Tibial artery (tissue), 4 donors: ENCODE measurements at regions of chr10 and their contacts with region 1.

Region 1: DNA sequence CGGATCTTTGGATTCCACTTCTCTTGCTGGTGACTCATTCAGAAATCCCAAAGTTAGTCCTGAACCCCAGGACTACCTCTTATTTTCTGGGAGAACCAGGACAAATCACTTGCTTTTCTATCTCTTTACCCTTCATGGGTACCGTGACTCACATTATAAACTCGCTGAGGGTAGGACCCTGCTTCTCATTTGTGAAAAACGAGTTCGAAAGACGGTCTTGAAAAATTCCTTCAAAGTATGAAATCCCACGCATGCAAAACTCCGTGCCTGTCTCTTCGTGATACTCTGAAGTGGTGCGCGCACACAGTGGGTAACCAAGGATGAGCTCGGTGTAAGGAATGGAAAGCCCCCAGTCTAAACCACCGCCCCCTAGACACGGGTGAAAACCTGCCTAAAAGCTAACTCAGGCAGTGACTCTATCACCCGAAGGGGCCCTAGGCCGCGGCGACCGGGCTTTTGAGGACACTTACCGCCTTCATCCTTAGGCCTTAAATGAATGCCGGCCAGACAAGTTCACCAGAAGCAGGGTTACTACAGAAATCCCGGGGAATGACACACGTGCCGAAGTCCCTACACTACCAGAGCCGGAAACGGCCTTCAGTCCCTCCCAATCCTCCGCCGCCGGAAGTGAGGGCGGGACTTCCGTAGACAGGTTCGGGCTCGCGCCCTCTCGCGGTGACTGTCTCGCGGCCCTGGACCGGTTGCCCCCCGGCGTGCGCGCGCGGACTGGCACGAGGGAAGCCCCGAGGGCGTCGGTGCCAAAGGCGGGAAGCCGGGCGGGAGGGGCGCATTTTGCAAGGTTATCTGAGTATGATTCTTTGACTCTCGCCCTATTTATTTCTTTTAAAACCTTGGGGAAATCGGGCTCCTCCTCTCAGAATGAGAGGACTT is at the start of gene NOC3L:
- DNase-seq: peak; percentile 95 to 96
- H3K4me3 ChIP-seq: peak within 1 kb of the TSS; percentile 64 to 71
- H3K27ac ChIP-seq: peak within 1 kb of the TSS; percentile 55 to 75
- H3K4me1 ChIP-seq: peaks cover 0 to 17% (median 12%) of the 10 kb centered on the region in 4 donors
- H3K27me3 ChIP-seq: no peaks in the 10 kb centered on the region
- CTCF ChIP-seq: peak; percentile 71 to 83

Region 2: DNA sequence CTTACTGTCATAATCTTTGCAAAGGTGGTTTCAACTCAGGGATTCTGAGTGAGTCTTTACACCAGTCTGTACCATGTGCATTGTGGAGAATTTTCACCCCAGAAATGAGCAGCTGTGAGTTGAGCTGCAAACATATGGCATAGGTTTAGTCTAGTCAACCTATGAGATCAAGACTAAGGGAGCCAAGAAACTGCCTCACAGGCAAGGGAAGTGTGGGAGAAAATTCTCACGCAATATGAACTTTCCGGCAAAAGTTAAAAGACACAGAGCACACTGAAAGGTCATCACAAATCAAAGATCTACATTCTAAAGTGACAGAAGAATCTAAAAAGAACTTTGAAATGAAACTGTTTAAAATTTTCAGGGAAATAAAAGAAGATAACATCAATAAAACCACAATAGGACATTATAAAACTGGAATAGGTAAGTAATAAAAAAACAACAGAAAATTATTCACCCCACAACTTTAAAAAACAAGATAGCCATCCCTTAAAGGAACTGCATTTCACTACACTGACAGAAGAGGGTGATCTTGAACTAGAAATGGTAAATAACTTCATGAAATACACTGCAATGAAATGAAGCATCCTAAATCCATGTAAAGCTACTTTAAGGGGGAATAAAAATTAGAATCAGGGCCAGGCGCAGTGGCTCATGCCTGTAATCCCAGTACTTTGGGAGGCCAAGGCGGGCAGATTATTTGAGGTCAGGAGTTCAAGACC is 541.4 kb before region 1 on chr10:
- intact Hi-C with region 1: no loop called
- DNase-seq: no peak
- H3K4me3 ChIP-seq: no peak overlapping the region
- H3K27ac ChIP-seq: no peak overlapping the region
- H3K4me1 ChIP-seq: peaks cover 0 to 8% (median 2%) of the 10 kb centered on the region in 4 donors
- H3K27me3 ChIP-seq: no peaks in the 10 kb centered on the region
- CTCF ChIP-seq: no peak

Region 3: GRCh38 chr10:94052866-94053791 is 309.5 kb before region 1 on chr10:
- intact Hi-C with region 1: no loop called
- DNase-seq: no peak
- H3K4me3 ChIP-seq: no peak overlapping the region
- H3K27ac ChIP-seq: no peak overlapping the region
- H3K4me1 ChIP-seq: peaks cover 0 to 11% (median 0%) of the 10 kb centered on the region in 4 donors
- H3K27me3 ChIP-seq: no peaks in the 10 kb centered on the region
- CTCF ChIP-seq: no peak

Region 4: DNA sequence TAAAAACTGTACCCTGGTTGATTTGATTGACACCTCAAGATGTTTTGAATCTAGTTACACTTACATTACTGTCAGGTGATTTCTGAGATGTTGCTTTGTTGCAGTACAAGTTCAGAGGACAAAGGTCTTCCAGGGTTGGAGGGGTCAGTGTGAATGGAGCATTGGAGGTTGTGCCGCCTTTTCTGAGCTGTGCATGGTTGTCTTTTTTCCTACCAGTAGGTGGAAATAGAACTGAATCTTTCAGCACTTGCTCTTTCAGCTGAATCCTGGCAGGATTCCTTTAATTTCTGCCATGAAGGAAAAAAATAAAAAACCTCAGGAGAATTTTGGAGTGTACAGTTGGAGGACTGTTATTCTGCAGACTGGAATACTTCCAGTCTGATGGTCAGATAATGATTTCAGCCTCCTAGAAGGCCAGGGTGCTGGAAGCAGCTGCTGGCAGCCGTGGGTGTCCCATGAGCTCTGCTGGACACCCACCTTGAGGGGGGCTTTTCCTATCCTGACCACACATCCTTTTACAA is 286.2 kb before region 1 on chr10:
- intact Hi-C with region 1: no loop called
- DNase-seq: no peak
- H3K4me3 ChIP-seq: peak overlapping the region in 1 of 2 donors; percentile 18
- H3K27ac ChIP-seq: no peak overlapping the region
- H3K4me1 ChIP-seq: peaks cover 0 to 19% (median 9%) of the 10 kb centered on the region in 4 donors
- H3K27me3 ChIP-seq: no peaks in the 10 kb centered on the region
- CTCF ChIP-seq: peak; percentile 64 to 83

Region 5: DNA sequence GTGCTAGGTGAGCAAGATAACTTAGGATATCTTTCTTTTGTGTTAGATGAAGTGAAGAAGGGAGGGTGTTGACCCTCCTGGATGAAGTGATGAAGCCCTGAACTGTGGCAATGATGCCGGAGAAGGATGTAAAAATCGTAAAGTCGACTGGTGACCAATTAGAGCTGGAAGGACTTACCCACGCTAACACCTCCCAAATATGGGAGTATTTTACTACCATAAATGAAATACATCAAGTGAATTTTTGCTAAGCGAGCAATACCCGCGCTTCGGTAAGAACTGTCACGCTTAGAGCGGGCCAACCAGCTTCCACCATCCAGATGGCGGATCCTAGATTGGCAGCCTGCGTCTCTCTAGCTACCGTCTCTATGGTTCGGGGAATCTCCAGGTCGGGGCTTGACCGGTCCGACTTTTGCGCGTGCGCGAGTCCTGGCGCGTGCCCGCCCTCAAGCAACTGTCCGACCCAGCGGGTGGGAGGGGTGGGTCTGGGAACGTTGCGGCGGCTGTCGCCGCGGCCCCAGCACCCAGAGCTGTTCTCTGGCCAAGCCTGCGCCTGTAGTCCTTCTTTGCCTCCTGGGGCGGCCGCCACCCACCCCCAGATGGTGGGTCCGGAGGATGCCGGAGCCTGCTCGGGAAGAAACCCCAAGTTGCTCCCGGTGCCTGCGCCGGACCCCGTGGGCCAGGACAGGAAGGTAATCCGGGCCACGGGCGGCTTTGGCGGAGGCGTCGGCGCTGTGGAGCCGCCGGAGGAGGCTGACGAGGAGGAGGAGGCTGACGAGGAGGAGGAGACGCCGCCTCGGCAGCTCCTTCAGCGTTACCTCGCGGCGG is 39.6 kb after region 1 on chr10 and contains the start of gene TBC1D12:
- intact Hi-C with region 1: loop called (anchors 5 kb)
- DNase-seq: peak; percentile 93 to 97
- H3K4me3 ChIP-seq: peak within 1 kb of the TSS; percentile 64 to 78
- H3K27ac ChIP-seq: peak within 1 kb of the TSS; percentile 95
- H3K4me1 ChIP-seq: peaks cover 0 to 33% (median 13%) of the 10 kb centered on the region in 4 donors
- H3K27me3 ChIP-seq: no peaks in the 10 kb centered on the region
- CTCF ChIP-seq: no peak

Region 6: DNA sequence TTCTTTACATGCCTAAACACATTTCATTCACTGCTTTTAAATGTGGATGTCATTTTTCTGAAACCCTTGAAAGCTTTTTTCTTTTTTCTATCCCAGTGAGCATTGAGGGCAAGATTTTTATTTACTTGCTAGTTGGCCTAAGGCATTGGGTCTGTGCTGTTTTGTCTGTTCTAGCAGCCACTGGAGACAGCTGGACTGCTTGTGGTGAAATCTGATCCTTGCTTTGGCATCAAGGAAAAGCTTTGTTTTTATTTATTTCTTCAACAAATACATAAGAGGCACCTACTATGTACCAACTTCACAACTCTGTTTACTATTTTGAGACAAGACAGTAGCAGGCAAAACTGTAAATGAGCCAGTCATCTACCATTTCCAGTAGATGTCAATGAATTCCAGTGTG is 956.6 kb after region 1 on chr10:
- intact Hi-C with region 1: no loop called
- DNase-seq: no peak
- H3K4me3 ChIP-seq: no peak overlapping the region
- H3K27ac ChIP-seq: no peak overlapping the region
- H3K4me1 ChIP-seq: peaks cover 0 to 27% (median 4%) of the 10 kb centered on the region in 4 donors
- H3K27me3 ChIP-seq: no peaks in the 10 kb centered on the region
- CTCF ChIP-seq: no peak